Sciatic nerve (tissue), 2 donors: ENCODE measurements at regions of chr14 and their contacts with region 1.

Region 1: GRCh38 chr14:67166450-67166853 is 22.8 kb upstream of the GARIN2 start:
- DNase-seq: no peak
- ATAC-seq: no peak

Region 2: DNA sequence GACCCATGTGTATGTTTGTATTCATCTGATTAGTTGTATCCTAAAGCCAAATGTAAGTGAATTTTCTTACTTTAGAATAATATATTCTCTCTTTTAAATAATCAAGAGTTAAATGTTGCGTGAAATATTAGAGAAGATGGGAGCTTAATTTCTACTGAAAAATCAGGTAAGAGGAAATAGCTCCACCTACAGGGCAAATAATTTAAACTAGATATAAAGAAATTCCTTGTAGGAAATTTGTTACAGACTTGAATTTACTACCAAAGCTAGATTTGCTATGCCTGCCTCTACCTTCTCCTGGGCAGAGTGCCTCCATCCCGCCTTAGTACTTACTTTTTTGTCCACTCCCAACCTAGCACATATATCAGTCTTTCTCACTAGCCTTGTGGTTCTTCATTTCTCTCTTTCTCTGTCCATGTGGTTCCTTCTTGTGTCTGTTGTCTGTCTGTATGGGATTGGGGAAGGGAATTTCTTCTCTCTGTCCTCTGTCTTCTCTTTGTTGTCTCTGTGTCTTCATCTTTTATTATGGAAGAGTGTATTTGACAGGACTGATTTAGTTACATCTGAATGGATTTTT is 119.5 kb after region 1 on chr14:
- intact Hi-C with region 1: loop called (anchors 10 kb)
- DNase-seq: no peak
- ATAC-seq: no peak